ENCODE measurements at regions of chr6 and their contacts with region 1.

Region 1: DNA sequence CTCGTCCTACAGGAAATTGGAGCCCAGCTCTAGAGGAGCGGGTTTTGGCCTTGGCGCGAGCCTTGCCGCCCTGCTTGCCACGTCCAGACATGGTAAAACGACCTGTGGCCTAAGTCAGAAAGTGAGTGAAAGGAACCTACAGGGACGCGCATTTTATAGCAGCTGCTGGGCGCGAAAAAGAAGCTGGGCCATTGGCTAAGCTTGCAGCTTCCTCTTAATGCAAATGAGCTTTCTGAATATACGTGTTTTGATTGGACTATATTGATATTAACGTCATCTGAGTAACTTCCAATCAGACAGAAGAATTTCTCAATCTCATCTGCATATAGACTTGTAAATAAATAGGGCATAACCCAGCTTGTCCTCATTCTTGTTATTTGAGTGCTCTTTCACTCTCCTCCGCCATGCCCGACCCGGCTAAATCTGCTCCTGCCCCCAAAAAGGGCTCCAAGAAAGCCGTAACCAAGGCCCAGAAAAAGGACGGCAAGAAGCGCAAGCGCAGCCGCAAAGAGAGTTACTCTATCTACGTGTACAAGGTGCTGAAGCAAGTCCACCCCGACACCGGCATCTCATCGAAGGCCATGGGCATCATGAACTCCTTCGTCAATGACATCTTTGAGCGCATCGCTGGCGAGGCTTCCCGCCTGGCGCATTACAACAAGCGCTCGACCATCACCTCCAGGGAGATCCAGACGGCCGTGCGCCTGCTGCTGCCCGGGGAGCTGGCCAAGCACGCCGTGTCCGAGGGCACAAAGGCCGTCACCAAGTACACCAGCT is 18.9 kb downstream of the OR2B2 start:
- DNase-seq: peak; percentile 90

Region 2: GRCh38 chr6:27161946-27162603 is 731.2 kb before region 1 on chr6:
- intact Hi-C with region 1: loop called (anchors 5 kb)
- DNase-seq: no peak

Region 3: DNA sequence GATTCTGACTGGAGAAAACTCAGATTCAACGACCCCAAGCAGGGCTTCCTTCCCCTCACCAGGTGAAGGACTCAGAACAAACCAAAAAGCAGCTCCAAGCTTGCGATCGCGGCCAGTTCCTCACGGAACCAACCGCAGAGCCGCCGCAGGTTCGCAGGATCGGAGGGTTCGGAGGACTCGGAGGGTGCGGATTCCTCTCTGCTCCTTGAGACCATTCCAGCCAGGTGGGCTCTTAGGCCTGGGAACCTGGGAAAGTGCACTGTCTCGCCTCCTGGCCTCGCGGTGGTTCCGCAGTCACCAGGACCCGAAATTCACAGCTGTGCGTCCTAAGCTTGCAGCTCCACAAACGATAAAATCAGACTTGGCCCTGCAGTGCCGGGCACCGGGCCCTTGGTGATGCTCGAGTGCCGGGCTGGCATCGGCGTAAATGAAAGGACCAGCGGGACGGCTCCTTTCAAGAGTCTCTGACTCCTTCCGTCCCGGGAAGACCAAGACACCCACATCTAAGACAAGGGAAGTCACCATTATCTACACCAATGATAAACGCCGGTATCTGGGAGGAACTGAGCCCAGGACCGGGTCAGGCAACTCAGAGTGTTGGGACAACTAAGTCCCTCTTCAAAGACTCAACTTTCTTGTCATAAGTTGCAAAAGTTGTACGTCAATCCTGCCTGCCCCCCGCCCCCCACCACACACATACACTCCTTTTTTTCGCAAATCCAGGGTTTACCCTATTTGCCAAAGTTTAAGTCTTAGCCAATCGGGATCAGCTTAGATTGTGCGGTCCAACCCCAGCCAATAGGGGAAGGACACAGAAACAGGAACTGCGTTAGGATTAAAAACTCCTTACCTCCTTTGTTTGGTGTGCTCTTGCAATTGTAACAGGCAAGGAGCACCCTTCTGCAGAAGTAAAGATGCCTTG is 715.5 kb before region 1 on chr6:
- intact Hi-C with region 1: loop called (anchors 5 kb)
- DNase-seq: peak; percentile 84

Region 4: GRCh38 chr6:27772261-27773001 is 120.8 kb before region 1 on chr6:
- intact Hi-C with region 1: loop called (anchors 5 kb)
- DNase-seq: peak; percentile 93

Region 5: GRCh38 chr6:27809939-27810767 is 83.1 kb before region 1 on chr6:
- intact Hi-C with region 1: loop called (anchors 5 kb)
- DNase-seq: peak; percentile 88

Region 6: GRCh38 chr6:27871924-27872638 is 21.2 kb before region 1 on chr6:
- intact Hi-C with region 1: loop called (anchors 2 kb)
- DNase-seq: peak; percentile 84

Measured in cardiac septum (tissue), 1 donor.